Naive thymus-derived CD4-positive, alpha-beta T cell (primary cell): ENCODE measurements at regions of chr14 and their contacts with region 1.

Region 1: DNA sequence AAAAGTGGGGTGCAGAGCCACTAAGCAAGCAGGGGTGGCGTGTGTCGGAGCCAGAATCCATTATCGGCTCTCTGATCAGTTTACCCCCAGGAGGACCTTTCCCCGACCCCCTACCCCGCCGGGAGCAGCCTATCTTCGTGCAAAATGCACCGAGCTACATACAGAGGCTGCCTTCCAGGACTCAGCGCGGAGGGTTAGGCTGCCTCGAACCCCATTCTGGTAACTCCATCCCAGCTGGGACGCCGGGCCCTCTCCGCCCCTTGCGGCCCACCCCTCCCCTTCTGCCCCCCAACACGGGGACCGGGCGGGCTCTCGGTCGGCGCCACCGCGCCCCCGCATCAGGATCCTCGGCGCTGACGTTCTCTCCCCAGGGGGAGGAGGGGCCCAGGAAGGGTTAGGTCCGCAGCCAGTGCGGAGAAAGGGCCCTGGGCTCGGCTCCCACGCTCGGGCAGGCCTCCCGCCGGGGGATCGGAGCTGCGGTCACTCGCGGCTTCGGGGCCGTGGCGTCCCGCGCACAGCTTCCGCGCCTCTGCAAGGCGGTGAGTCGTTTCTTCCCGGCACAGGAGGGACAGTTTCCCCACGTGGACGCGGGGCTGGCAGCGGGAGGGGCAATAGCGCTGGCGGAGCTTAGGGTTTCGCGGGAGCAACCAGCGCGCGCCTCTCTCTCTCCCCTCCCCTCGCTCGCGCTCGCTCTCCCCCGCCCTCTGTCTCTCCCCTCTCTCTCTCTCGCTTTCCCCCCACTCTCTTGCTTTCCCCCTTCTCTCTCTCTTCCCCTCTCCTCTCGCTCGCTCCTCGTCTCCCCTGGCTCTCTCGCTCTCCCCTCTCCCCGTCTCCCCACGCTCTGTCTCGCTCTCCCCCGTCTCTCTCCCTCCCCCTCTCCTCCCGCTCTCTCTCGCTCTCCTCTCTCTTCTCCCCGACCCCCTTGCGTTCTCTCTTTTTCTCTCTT is 12.5 kb upstream of the MAP3K9 start:
- DNase-seq: peak in 7 of 9 donors; percentile 27 to 77 (median 38)
- ATAC-seq: peak; percentile 47
- H3K4me3 ChIP-seq: peak overlapping the region; percentile 64
- H3K4me3 Mint-ChIP-seq: peak overlapping the region; percentile 63 to 88 (median 86)
- H3K27ac ChIP-seq: peak overlapping the region; percentile 33
- H3K27ac Mint-ChIP-seq: peak overlapping the region in 3 of 9 donors; percentile 21 to 76 (median 46)
- H3K4me1 ChIP-seq: peaks cover 0 to 15% of the 10 kb centered on the region in 2 donors
- H3K4me1 Mint-ChIP-seq: peaks cover 6 to 36% (median 16%) of the 10 kb centered on the region in 7 donors
- H3K27me3 ChIP-seq: no peaks in the 10 kb centered on the region
- H3K27me3 Mint-ChIP-seq: peaks cover 6 to 34% (median 11%) of the 10 kb centered on the region in 5 donors

Region 2: GRCh38 chr14:69818757-69819191 is 1003.1 kb before region 1 on chr14:
- CTCF ChIA-PET with region 1: no interaction called
- POLR2A ChIA-PET with region 1: no interaction called
- intact Hi-C with region 1: loop called in 1 of 2 experiments (anchors 1 kb)
- DNase-seq: peak; percentile 16 to 76 (median 53)
- ATAC-seq: peak; percentile 84
- H3K4me3 ChIP-seq: no peak overlapping the region
- H3K4me3 Mint-ChIP-seq: no peak overlapping the region
- H3K27ac ChIP-seq: no peak overlapping the region
- H3K27ac Mint-ChIP-seq: no peak overlapping the region
- H3K4me1 ChIP-seq: no peaks in the 10 kb centered on the region
- H3K4me1 Mint-ChIP-seq: peaks cover 0 to 4% (median 3%) of the 10 kb centered on the region in 7 donors
- H3K27me3 ChIP-seq: no peaks in the 10 kb centered on the region
- H3K27me3 Mint-ChIP-seq: peaks cover 0 to 8% (median 4%) of the 10 kb centered on the region in 5 donors

Region 3: DNA sequence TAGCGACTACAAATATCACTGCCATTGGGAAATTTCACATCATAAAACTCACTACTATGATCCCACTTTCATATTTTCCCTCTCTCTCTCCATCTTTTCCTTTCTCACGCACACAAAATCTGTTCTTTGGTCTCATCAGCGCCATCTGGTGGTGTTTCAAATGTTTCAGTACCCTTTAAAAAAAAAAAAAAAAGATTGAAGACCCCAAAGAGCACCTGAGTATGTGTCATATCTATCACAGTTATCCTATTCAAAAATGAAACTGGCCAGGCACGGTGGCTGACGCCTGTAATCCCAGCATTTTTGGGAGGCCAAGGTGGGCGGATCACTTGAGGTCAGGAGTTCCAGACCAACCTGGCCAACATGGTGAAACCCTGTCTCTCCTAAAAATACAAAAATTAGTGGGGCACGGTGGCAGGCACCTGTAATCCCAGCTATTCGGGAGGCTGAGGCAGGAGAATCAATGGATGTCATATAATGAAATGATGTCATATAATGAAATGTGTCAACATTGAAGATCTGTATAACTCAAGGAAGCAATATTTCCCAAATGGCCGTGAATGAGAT is 107.7 kb before region 1 on chr14:
- CTCF ChIA-PET with region 1: no interaction called
- POLR2A ChIA-PET with region 1: interaction called, 3 read pairs
- intact Hi-C with region 1: loop called (anchors 1 kb)
- DNase-seq: peak in 7 of 9 donors; percentile 24 to 62 (median 43)
- ATAC-seq: no peak
- H3K4me3 ChIP-seq: no peak overlapping the region
- H3K4me3 Mint-ChIP-seq: peak overlapping the region in 2 of 10 donors; percentile 38 to 53
- H3K27ac ChIP-seq: no peak overlapping the region
- H3K27ac Mint-ChIP-seq: no peak overlapping the region
- H3K4me1 ChIP-seq: peaks cover 2 to 4% of the 10 kb centered on the region in 2 donors
- H3K4me1 Mint-ChIP-seq: peaks cover 3 to 7% (median 5%) of the 10 kb centered on the region in 7 donors
- H3K27me3 ChIP-seq: no peaks in the 10 kb centered on the region
- H3K27me3 Mint-ChIP-seq: peaks cover 0 to 9% (median 4%) of the 10 kb centered on the region in 5 donors

Region 4: GRCh38 chr14:70873627-70874026 is 51.8 kb after region 1 on chr14:
- CTCF ChIA-PET with region 1: interaction called, 3 read pairs
- POLR2A ChIA-PET with region 1: interaction called, 5 read pairs
- intact Hi-C with region 1: loop called in 1 of 2 experiments (anchors 1 kb)
- DNase-seq: peak in 3 of 9 donors; percentile 19 to 30 (median 30)
- ATAC-seq: peak; percentile 74
- H3K4me3 ChIP-seq: no peak overlapping the region
- H3K4me3 Mint-ChIP-seq: peak overlapping the region in 3 of 10 donors; percentile 2 to 68 (median 33)
- H3K27ac ChIP-seq: no peak overlapping the region
- H3K27ac Mint-ChIP-seq: peak overlapping the region in 6 of 9 donors; percentile 4 to 97 (median 39)
- H3K4me1 ChIP-seq: peaks cover 11 to 16% of the 10 kb centered on the region in 2 donors
- H3K4me1 Mint-ChIP-seq: peaks cover 6 to 25% (median 15%) of the 10 kb centered on the region in 7 donors
- H3K27me3 ChIP-seq: no peaks in the 10 kb centered on the region
- H3K27me3 Mint-ChIP-seq: no peaks in the 10 kb centered on the region

Region 5: DNA sequence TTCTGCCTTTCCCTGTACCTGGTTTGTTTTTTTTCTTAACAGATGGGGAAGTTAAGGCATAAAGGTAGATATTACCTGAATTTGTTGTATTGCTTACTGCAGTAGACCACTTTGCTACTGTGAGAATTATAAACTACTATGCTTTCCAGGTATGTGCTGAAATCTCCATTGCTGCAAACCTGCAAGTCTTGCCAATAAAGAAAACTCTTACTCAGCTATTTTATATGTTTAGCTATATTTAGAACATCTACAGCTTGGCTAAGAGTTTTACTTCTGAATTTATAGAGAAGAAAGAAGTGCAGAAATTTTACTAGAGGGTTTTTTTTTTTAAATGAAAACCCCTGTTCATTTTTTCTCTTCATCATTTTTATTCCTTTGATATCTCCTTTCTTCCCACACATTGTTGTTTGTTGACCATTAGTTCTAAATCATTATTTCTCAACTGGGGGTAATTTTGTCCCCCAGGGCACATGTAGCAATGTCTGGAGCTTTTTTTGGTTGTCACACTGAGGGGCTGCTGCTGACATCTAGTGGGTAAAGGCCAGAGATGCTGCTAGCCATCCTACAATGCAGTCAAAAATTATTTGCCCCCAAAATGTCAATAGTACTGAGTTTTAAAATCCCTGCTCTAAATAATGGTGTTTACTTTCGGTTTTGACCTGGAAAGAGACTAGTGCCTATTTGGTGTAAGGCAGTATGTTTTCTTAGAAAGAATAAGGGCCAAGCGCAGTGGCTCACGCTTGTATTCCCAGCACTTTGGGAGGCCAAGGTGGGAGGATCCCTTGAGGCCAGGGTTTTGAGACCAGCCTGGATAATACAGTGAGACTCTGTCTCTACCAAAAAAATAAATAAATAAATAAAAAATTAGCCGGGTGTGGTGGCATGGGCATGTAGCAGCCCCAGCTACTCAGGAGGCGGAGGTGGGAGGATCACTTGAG is 134.0 kb after region 1 on chr14:
- CTCF ChIA-PET with region 1: interaction called, 69 read pairs
- POLR2A ChIA-PET with region 1: interaction called, 13 read pairs
- intact Hi-C with region 1: loop called (anchors 1 kb)
- DNase-seq: peak in 7 of 9 donors; percentile 29 to 67 (median 52)
- ATAC-seq: peak; percentile 80
- H3K4me3 ChIP-seq: no peak overlapping the region
- H3K4me3 Mint-ChIP-seq: peak overlapping the region in 2 of 10 donors; percentile 12 to 38
- H3K27ac ChIP-seq: no peak overlapping the region
- H3K27ac Mint-ChIP-seq: peak overlapping the region in 5 of 9 donors; percentile 8 to 85 (median 13)
- H3K4me1 ChIP-seq: peaks cover 18 to 19% of the 10 kb centered on the region in 2 donors
- H3K4me1 Mint-ChIP-seq: peaks cover 25 to 53% (median 40%) of the 10 kb centered on the region in 7 donors
- H3K27me3 ChIP-seq: no peaks in the 10 kb centered on the region
- H3K27me3 Mint-ChIP-seq: no peaks in the 10 kb centered on the region